Activated CD4-positive, alpha-beta memory T cell treated with anti-CD3 and anti-CD28 coated beads, Interleukin-2, amount 10 ng/mL, durations not matched to agents 7 days and 5 days (primary cell): ENCODE measurements at regions of chr6 and their contacts with region 1.

Region 1: DNA sequence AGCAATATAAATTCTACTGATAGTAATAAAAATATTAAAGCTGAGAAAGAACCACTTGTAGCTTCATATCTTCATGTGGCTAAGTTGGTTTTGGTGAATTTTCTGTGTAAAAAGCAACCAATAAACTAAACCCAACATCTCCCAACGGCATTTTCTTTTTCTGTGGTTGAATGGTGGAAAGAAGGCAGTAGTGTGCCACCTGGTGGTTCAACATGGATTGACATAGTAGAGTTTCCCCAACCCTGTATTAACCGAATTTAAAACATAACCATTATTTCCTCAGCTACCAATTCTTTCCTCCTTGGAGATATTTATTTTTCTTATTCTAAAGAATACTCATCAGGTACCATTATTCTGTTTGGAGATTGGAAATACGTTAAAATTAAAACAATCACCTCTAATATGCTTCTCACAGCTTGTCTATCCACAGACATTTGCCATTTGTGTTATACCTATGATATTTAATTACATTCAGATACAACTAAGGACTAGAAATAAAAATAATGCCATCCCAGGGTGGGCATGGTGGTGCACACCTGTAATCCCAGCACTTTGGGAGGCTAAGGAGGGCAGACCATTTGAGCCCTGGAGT is 117.1 kb upstream of the EEF1E1 start:
- DNase-seq: peak; percentile 28
- H3K4me3 Mint-ChIP-seq: no peak overlapping the region
- H3K27ac Mint-ChIP-seq: no peak overlapping the region
- H3K4me1 Mint-ChIP-seq: no peaks in the 10 kb centered on the region
- H3K27me3 Mint-ChIP-seq: no peaks in the 10 kb centered on the region

Region 2: GRCh38 chr6:7725849-7726415 is 493.5 kb before region 1 on chr6 and contains the start of gene BMP6:
- CTCF ChIA-PET with region 1: interaction called, 11 read pairs
- POLR2A ChIA-PET with region 1: no interaction called
- DNase-seq: peak; percentile 71
- H3K4me3 Mint-ChIP-seq: peak within 1 kb of the TSS; percentile 67
- H3K27ac Mint-ChIP-seq: no peak within 1 kb of the TSS
- H3K4me1 Mint-ChIP-seq: peaks cover 18% of the 10 kb centered on the region
- H3K27me3 Mint-ChIP-seq: peaks cover 76% of the 10 kb centered on the region
- total RNA-seq, gene BMP6: not detected

Region 3: GRCh38 chr6:8131256-8131897 is 88.1 kb before region 1 on chr6:
- CTCF ChIA-PET with region 1: interaction called, 82 read pairs
- POLR2A ChIA-PET with region 1: no interaction called
- DNase-seq: peak; percentile 24
- H3K4me3 Mint-ChIP-seq: no peak overlapping the region
- H3K27ac Mint-ChIP-seq: no peak overlapping the region
- H3K4me1 Mint-ChIP-seq: no peaks in the 10 kb centered on the region
- H3K27me3 Mint-ChIP-seq: peaks cover 14% of the 10 kb centered on the region

Region 4: GRCh38 chr6:8201679-8202078 is 17.8 kb before region 1 on chr6:
- CTCF ChIA-PET with region 1: interaction called, 15 read pairs
- POLR2A ChIA-PET with region 1: no interaction called
- DNase-seq: no peak
- H3K4me3 Mint-ChIP-seq: no peak overlapping the region
- H3K27ac Mint-ChIP-seq: no peak overlapping the region
- H3K4me1 Mint-ChIP-seq: no peaks in the 10 kb centered on the region
- H3K27me3 Mint-ChIP-seq: peaks cover 5% of the 10 kb centered on the region

Region 5: DNA sequence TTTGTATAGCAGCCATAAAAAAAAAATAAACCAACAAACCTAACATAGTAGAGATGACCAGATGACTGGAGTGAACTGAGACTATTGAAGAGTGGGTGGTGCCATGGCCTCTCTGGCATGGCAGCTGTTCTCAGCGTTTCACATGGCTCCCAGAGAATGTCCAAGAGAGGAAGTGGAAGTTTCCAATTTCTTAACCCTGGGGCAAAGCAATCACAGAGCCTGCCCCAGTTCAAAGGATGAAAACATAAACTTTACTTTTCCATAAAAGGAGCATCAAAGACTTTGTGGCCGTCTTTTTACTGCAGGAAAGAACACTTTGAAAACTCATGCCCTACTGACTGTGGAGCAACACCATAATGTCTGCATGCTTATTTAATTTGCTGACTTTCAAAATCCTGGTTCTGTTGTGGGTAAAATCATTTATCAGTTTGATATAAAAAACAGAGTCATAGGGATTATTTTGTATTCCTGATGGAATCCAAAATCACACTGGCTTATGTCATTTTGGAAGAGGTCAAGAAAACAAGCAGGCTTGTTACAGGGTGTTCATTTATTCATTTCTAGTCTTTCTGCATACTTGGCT is 50.5 kb after region 1 on chr6:
- CTCF ChIA-PET with region 1: no interaction called
- POLR2A ChIA-PET with region 1: no interaction called
- DNase-seq: no peak
- H3K4me3 Mint-ChIP-seq: no peak overlapping the region
- H3K27ac Mint-ChIP-seq: no peak overlapping the region
- H3K4me1 Mint-ChIP-seq: no peaks in the 10 kb centered on the region
- H3K27me3 Mint-ChIP-seq: no peaks in the 10 kb centered on the region